Mucosa of descending colon (tissue), 3 donors: ENCODE measurements at regions of chr19 and their contacts with region 1.

Region 1: DNA sequence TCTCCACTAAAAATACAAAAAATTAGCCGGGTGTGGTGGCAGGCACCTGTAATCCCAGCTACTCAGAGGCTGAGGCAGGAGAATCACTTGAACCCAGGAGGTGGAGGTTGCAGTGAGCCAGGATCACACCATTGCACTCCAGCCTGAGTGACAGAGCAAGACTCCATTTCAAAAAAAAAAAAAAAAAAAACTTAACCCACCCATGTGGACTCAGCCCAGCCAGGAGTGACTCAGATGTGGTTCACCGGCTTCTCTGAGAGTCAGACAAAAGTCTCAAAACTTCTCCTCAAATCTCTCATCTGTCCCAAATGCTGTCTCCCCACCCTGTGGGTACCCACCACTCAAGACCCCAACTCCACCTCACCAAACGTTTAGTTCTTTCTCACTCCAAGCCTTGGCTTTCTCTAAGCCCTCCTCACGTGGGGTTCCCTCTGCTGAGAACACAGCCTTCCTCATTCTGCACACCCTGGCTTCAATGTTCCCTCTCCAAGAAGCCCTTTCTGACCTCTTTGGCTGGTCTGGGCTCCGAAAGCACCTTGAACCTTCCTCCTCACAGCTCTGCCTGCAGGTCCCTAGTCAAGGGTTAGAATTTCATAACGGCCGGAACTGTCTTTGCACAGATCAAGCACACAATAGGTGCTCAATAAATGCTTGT is 11.1 kb upstream of the RAB3A start:
- DNase-seq: no peak
- ATAC-seq: no peak
- H3K4me3 ChIP-seq: no peak overlapping the region
- H3K4me1 ChIP-seq: no peaks in the 10 kb centered on the region
- CTCF ChIP-seq: no peak

Region 2: DNA sequence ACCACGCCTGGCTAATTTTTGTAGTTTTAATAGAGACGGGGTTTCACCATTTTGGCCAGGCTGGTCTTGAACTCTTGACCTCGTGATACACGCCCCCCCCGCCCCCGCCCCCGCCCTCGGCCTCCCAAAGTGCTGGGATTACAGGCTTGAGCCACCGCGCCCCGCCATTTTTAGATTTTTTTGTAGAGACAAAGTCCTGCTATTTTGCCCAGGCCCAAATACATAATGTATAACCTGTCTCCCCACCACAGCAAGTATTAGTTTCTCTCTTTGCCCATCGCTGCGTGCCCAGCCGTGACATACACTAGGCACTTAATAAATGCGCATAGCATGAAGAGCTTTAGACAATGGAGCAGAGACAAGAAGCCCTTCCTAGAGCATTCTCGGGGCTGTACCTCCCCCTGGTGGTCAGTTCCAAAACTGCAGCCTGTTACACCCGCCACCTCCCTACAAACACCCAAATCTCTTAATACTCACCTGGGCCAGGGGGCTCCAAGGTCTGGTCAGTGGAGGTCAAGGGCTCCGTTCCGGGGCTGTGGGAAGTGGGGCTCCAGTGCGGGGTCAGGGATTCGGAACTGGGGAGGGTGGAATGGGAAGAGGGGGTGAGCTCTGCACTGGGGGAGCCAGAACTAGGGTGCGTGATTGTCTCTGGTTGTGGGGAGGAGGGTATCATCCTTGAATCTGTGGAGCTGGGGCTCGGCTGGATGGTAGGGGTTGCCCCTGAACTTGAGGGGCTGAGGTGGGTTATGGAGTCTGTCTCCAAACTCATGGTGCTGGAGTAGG is 36.9 kb after region 1 on chr19:
- intact Hi-C with region 1: loop called in 1 of 2 experiments (anchors 5 kb)
- DNase-seq: peak; percentile 66 to 88 (median 82)
- ATAC-seq: peak; percentile 53
- H3K4me3 ChIP-seq: no peak overlapping the region
- H3K4me1 ChIP-seq: peaks cover 19% of the 10 kb centered on the region
- CTCF ChIP-seq: peak; percentile 86

Region 3: GRCh38 chr19:18274781-18275356 is 60.0 kb after region 1 on chr19:
- intact Hi-C with region 1: no loop called
- DNase-seq: peak; percentile 87 to 94 (median 93)
- ATAC-seq: peak; percentile 81
- H3K4me3 ChIP-seq: no peak overlapping the region
- H3K4me1 ChIP-seq: peaks cover 55% of the 10 kb centered on the region
- CTCF ChIP-seq: no peak